BJ (cell line): ENCODE measurements at regions of chr5 and their contacts with region 1.

Region 1: GRCh38 chr5:153964880-153965645 is 73.6 kb downstream of the FAM114A2 start:
- DNase-seq: no peak
- H3K4me3 ChIP-seq: no peak overlapping the region
- H3K27me3 ChIP-seq: no peaks in the 10 kb centered on the region
- CTCF ChIP-seq: peak; percentile 89

Region 2: DNA sequence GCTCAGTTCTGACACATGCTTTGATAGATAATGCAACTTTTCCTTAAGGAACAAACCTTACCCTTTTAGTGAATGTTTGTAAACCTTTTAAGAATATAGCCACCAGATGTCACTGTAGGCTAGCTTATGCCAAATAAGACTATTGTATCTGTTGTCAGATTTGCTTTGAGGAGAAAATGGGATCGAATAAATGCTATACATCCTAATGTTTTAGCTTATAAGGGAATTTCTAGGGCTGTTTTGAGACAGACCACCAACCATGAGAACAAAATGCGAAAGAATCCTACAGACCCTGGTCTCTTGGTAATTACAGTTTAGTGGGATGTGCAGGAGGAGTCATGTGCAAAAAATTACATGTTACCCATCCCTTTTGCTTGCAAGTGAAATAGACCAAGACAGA is 1432.3 kb before region 1 on chr5:
- CTCF ChIA-PET with region 1: interaction called, 60 read pairs
- POLR2A ChIA-PET with region 1: no interaction called
- DNase-seq: peak; percentile 9
- H3K4me3 ChIP-seq: no peak overlapping the region
- H3K27me3 ChIP-seq: no peaks in the 10 kb centered on the region
- CTCF ChIP-seq: peak; percentile 42

Region 3: GRCh38 chr5:153496835-153497234 is 468.2 kb before region 1 on chr5:
- CTCF ChIA-PET with region 1: interaction called, 25 read pairs
- POLR2A ChIA-PET with region 1: no interaction called
- DNase-seq: no peak
- H3K4me3 ChIP-seq: no peak overlapping the region
- H3K27me3 ChIP-seq: no peaks in the 10 kb centered on the region
- CTCF ChIP-seq: peak; percentile 84

Region 4: DNA sequence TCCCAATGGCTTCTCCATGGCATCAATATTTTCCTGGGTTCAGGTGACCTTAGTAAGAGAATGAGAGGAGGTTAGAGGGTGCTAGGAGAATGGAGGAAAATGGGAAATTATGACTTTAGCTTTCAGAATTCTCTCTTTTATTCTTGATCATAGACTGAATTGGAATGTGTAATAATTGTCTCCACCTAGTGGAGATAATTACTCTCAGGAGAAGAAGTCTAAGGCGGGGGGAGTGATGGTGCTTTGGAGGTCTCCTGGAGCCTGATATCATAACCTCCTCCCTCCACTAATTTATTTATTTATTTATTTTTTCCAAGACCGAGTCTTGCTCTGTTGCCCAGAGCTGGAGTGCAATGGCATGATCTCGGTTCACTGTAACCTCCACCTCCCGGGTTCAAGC is 253.3 kb before region 1 on chr5:
- CTCF ChIA-PET with region 1: interaction called, 7 read pairs
- POLR2A ChIA-PET with region 1: interaction called, 11 read pairs
- DNase-seq: no peak
- H3K4me3 ChIP-seq: no peak overlapping the region
- H3K27me3 ChIP-seq: no peaks in the 10 kb centered on the region; the same call in 1 of the 2 replicates
- CTCF ChIP-seq: no peak

Region 5: GRCh38 chr5:153905219-153905618 is 59.8 kb before region 1 on chr5:
- CTCF ChIA-PET with region 1: interaction called, 29 read pairs
- POLR2A ChIA-PET with region 1: no interaction called
- DNase-seq: no peak
- H3K4me3 ChIP-seq: no peak overlapping the region
- H3K27me3 ChIP-seq: no peaks in the 10 kb centered on the region
- CTCF ChIP-seq: no peak